HEK293 (cell line): ENCODE measurements at regions of chr14 and their contacts with region 1.

Region 1: GRCh38 chr14:93115069-93115820 is 480 bp downstream of the ITPK1 start:
- H3K4me3 ChIP-seq: peak overlapping the region; percentile 77
- H3K27ac ChIP-seq: peak overlapping the region; percentile 92
- H3K4me1 ChIP-seq: peaks cover 17% of the 10 kb centered on the region
- CTCF ChIP-seq: no peak

Region 2: DNA sequence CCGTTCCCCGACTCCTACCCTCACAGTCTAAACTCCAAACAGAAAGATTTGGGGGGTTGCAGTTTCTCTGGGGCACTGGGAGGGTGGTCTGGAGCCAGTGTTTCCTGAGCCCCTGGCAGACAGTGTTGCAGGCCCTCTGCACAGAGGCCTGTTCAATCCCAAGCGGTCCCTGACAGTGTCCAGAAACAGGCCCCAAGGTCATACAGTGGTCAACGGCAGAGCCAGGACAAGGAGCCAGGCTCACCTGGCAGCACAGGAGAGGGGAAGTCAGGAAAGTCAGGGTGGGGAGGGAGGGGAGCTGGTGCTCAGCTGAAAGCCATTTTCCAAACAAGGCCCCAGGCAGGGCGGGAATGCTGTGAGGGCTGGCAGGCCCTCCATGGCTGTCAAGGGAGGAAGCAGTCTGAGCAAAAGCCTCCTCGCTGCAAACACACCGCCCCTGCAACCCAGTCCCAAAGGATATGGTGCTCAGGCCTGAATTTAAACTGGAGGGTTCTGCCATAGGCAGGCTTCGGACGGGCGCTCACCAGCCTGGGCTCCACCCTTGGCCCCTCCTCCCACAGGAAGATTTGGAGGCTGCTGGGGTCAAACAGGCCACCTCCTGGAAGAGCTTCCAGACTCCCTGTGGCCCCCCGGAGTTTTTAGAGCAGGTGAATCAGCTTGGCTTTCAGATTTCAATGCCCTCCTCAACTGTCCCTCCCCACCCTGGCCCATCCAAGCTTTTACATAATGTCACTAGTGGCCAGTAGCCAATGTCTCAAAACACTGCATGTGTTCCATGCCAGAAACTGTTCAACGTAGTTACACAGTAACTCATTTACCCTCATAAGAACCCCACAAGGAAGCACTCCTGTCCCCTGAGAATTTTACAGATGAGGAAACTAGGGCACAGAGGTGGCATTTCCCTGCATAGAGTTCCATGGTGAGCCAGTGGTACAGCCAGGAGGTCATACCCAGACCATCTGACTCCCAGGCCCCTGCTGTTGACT is 150.8 kb before region 1 on chr14:
- CTCF ChIA-PET with region 1: interaction called, 10 read pairs
- POLR2A ChIA-PET with region 1: no interaction called
- H3K4me3 ChIP-seq: no peak overlapping the region
- H3K27ac ChIP-seq: no peak overlapping the region
- H3K4me1 ChIP-seq: no peaks in the 10 kb centered on the region
- CTCF ChIP-seq: no peak

Region 3: DNA sequence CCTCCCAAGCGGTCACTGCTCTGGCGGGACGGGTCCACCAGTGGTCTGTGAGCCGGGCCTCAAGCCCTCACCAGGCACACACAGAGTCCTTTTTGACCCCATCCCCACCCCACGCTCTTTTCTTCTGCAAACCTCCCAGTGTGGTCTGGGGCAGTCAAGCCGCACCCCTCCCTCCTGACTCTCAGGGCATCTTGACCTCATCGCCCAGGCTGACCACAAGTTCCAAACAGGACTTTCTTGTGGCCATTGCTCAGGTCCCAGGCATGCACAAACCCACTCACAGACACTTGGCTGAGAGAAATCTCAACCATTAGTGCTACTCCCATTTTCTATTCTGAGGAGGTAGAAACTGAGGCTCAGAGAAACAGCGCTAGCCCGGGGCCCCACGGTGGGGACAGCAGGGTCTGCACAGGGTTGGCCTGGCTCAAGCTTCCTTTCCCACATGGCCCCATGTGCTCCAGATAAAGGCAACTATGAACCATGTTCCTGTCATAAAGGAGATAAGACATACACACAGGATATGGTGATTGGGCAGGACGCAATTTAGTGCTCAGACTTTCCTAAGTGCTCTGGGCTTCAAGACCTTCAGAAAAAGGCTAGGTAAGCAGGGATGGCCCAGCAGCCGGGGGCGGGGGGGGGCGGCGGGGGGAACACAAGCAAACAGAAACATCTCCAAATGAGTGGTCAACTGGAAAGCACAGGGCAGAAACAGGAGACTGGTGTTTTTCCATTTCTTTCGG is 69.1 kb before region 1 on chr14:
- CTCF ChIA-PET with region 1: interaction called, 10 read pairs
- POLR2A ChIA-PET with region 1: interaction called, 3 read pairs
- H3K4me3 ChIP-seq: no peak overlapping the region
- H3K27ac ChIP-seq: no peak overlapping the region
- H3K4me1 ChIP-seq: peaks cover 35% of the 10 kb centered on the region
- CTCF ChIP-seq: no peak

Region 4: DNA sequence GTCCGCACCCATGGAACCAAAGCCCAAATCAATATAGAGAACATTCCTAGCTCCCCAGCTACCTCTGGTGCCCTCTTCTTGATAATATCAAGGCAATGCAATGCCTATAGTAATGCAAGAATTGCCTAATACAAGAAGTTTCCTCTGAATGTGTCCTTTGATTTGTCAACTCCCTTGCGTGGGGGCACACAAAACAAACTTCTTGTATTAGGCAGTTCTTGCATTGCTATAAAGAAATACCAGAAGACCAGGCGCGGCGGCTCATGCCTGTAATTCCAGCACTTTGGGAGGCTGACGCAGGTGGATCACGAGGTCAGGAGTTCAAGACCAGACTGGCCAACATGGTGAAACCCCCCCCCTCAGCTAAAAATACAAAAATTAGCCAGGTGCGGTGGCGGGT is 10.9 kb after region 1 on chr14:
- CTCF ChIA-PET with region 1: interaction called, 155 read pairs
- POLR2A ChIA-PET with region 1: interaction called, 12 read pairs
- H3K4me3 ChIP-seq: no peak overlapping the region
- H3K27ac ChIP-seq: no peak overlapping the region
- H3K4me1 ChIP-seq: no peaks in the 10 kb centered on the region
- CTCF ChIP-seq: no peak

Region 5: DNA sequence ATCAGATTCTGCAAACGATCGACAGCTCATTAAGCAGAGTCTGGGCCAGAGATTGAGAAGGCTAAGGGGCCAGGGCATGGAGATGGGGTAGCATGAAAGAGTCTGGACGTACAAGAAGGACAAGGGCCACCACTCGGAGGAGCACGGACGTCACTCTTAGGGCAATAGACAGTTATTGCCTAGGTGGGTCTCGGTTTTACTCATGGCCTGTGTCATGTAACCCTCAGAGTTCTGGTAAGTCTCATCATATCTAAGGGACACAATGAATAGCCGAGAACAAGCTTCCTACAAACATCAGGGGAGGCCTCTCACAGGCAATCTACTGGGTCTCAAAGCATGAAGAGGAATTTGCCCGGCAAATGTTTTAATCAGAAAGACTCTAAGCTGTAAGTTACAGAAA is 30.9 kb after region 1 on chr14:
- CTCF ChIA-PET with region 1: interaction called, 155 read pairs
- POLR2A ChIA-PET with region 1: no interaction called
- H3K4me3 ChIP-seq: no peak overlapping the region
- H3K27ac ChIP-seq: no peak overlapping the region
- H3K4me1 ChIP-seq: no peaks in the 10 kb centered on the region
- CTCF ChIP-seq: no peak

Region 6: GRCh38 chr14:93184388-93185353 is 69.4 kb after region 1 on chr14 and contains the starts of genes LYSET and MOAP1:
- CTCF ChIA-PET with region 1: interaction called, 12 read pairs
- POLR2A ChIA-PET with region 1: interaction called, 3 read pairs
- H3K4me3 ChIP-seq: peak within 1 kb of the TSS; percentile 91
- H3K27ac ChIP-seq: peak within 1 kb of the TSS; percentile 97
- H3K4me1 ChIP-seq: peaks cover 6% of the 10 kb centered on the region; the same call in 1 of the 2 replicates
- CTCF ChIP-seq: peak; percentile 75